ENCODE measurements at regions of chr20 and their contacts with region 1.

Region 1: DNA sequence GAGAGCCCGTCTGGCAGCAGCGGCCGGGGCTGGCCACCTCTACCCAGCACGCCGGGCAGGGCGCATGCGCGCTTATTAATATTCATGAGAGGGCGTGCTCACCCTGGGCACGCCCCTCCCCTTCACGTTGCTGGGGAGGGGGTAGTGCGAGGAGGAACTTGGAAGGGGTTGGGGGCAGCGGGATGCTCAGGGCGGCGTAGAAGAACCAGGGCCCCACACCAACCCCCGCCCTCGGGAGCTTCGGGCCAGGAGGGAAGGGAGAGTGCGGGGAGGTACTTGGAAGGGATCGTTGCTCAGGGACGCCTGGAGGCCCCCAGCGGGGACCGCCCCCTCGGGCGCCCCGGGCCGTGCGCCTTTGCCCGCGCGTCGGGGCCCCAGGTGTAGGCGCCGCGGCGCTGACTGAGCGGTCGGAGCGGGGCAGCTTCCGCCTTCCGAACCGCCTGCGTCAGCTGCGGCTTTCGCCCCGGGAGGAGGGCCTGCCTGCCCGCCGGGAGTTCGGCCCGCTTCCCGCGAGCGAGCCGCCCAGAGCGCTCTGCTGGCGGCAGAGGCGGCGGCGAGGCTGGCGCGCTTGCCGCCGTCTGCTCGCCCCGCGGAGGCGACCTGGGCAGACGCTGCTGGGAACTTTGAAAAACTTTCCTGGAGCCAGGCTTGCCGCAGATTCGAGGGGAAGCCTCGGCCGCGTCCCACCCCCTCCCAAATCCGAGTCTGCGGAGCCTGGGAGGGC is at the start of gene JAG1:
- DNase-seq: peak; percentile 77
- H3K4me3 Mint-ChIP-seq: peak within 1 kb of the TSS; percentile 79
- H3K27ac Mint-ChIP-seq: no peak within 1 kb of the TSS
- H3K4me1 Mint-ChIP-seq: peaks cover 26% of the 10 kb centered on the region
- H3K27me3 Mint-ChIP-seq: peaks cover 71% of the 10 kb centered on the region
- total RNA-seq, gene JAG1: 0.15 to 0.40 TPM

Region 2: GRCh38 chr20:10357974-10358373 is 316.2 kb before region 1 on chr20:
- CTCF ChIA-PET with region 1: no interaction called
- POLR2A ChIA-PET with region 1: no interaction called
- intact Hi-C with region 1: loop called (anchors 5 kb)
- DNase-seq: no peak
- H3K4me3 Mint-ChIP-seq: no peak overlapping the region
- H3K27ac Mint-ChIP-seq: no peak overlapping the region
- H3K4me1 Mint-ChIP-seq: peaks cover 5% of the 10 kb centered on the region
- H3K27me3 Mint-ChIP-seq: no peaks in the 10 kb centered on the region

Region 3: GRCh38 chr20:10558635-10559187 is 115.4 kb before region 1 on chr20:
- CTCF ChIA-PET with region 1: interaction called, 4 read pairs
- POLR2A ChIA-PET with region 1: no interaction called
- intact Hi-C with region 1: loop called (anchors 2 kb)
- DNase-seq: peak; percentile 63
- H3K4me3 Mint-ChIP-seq: no peak overlapping the region
- H3K27ac Mint-ChIP-seq: no peak overlapping the region
- H3K4me1 Mint-ChIP-seq: peaks cover 9% of the 10 kb centered on the region
- H3K27me3 Mint-ChIP-seq: no peaks in the 10 kb centered on the region

Region 4: GRCh38 chr20:10596726-10597125 is 77.4 kb before region 1 on chr20:
- CTCF ChIA-PET with region 1: no interaction called
- POLR2A ChIA-PET with region 1: interaction called, 3 read pairs
- intact Hi-C with region 1: loop called (anchors 1 kb)
- DNase-seq: no peak
- H3K4me3 Mint-ChIP-seq: no peak overlapping the region
- H3K27ac Mint-ChIP-seq: no peak overlapping the region
- H3K4me1 Mint-ChIP-seq: peaks cover 12% of the 10 kb centered on the region
- H3K27me3 Mint-ChIP-seq: no peaks in the 10 kb centered on the region

Region 5: DNA sequence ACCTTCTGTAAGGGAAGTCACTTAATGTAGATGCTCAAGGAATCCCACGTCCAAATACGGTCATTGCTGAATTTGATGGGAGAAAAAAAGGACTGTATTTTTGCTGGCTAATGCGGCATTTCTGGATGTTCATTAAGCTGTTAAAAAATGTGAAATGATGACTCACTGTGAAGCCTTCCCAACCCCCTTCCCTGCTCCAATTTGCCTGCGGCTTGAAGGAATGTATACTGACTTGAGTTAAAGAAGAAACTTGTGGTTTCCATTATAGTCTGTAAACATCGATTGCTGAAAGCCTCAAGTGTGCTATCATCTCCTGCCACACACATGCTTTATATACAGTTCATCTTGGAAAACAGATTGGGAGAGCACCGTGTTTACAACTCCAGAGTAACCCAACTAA is 248.8 kb after region 1 on chr20:
- CTCF ChIA-PET with region 1: no interaction called
- POLR2A ChIA-PET with region 1: no interaction called
- intact Hi-C with region 1: no loop called
- DNase-seq: no peak
- H3K4me3 Mint-ChIP-seq: no peak overlapping the region
- H3K27ac Mint-ChIP-seq: no peak overlapping the region
- H3K4me1 Mint-ChIP-seq: no peaks in the 10 kb centered on the region
- H3K27me3 Mint-ChIP-seq: no peaks in the 10 kb centered on the region